ENCODE measurements at regions of chr10 and their contacts with region 1.

Region 1: GRCh38 chr10:43671656-43672531 is 23.2 kb upstream of the ZNF32 start:
- DNase-seq: peak; percentile 14 to 44
- ATAC-seq: peak; percentile 73 to 83
- H3K4me3 ChIP-seq: no peak overlapping the region
- H3K27ac ChIP-seq: no peak overlapping the region
- H3K4me1 ChIP-seq: no peaks in the 10 kb centered on the region
- H3K27me3 ChIP-seq: peaks cover 8 to 16% (median 8%) of the 10 kb centered on the region in 3 donors
- CTCF ChIP-seq: peak; percentile 76 to 88 (median 82)
- POLR2A ChIP-seq: no peak

Region 2: GRCh38 chr10:44217274-44217820 is 545.5 kb after region 1 on chr10:
- in situ Hi-C with region 1: no loop called
- intact Hi-C with region 1: no loop called
- DNase-seq: no peak
- ATAC-seq: no peak
- H3K4me3 ChIP-seq: no peak overlapping the region
- H3K27ac ChIP-seq: no peak overlapping the region
- H3K4me1 ChIP-seq: no peaks in the 10 kb centered on the region
- H3K27me3 ChIP-seq: no peaks in the 10 kb centered on the region
- CTCF ChIP-seq: no peak
- POLR2A ChIP-seq: no peak

Region 3: GRCh38 chr10:44310762-44311562 is 639.1 kb after region 1 on chr10:
- in situ Hi-C with region 1: loop called in 3 of 4 experiments (anchors 10 to 25 kb)
- intact Hi-C with region 1: loop called (anchors 1 kb)
- DNase-seq: peak; percentile 80 to 88
- ATAC-seq: peak; percentile 73 to 83
- H3K4me3 ChIP-seq: peak overlapping the region; percentile 27 to 62 (median 36)
- H3K27ac ChIP-seq: peak overlapping the region in 3 of 4 donors; percentile 21 to 39 (median 35)
- H3K4me1 ChIP-seq: peaks cover 0 to 8% of the 10 kb centered on the region in 2 donors
- H3K27me3 ChIP-seq: no peaks in the 10 kb centered on the region
- CTCF ChIP-seq: peak; percentile 85 to 97 (median 93)
- POLR2A ChIP-seq: no peak

Region 4: GRCh38 chr10:44398747-44399658 is 727.1 kb after region 1 on chr10:
- in situ Hi-C with region 1: loop called in 2 of 4 experiments (anchors 5 to 10 kb)
- intact Hi-C with region 1: no loop called
- DNase-seq: no peak
- ATAC-seq: no peak
- H3K4me3 ChIP-seq: no peak overlapping the region
- H3K27ac ChIP-seq: no peak overlapping the region
- H3K4me1 ChIP-seq: peaks cover 0 to 5% of the 10 kb centered on the region in 2 donors
- H3K27me3 ChIP-seq: no peaks in the 10 kb centered on the region
- CTCF ChIP-seq: no peak
- POLR2A ChIP-seq: no peak

Region 5: DNA sequence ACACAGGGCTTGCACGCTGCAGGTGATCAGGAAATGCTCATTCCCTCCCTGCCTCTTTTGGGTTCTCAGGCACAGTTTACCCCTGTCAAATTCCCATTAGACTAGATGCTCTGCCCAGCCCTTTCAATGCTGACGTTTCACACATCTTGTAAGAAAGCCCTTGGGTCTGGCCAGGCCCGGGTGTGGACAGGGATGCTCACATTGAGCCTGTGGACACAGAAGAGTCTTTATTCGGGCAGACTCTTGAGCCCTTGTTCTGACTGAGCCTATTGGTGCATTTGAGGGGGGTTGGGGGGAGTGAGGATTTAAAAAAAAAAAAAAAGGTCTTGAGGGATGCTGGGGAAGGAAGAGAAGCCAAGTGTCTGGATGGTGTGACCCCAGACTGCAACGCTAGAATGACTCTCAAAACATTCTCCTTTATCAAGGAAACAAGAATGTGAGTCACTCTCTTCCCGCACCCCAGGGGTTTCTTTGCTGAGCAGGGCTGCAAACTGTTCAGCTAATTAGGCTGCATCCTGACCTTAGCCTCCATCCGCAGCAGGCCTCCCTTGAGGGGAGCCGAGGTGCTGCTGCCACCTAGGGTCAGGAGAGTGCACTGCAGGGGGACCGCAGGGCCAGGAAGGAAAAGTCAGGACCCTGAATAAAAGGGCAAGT is 1185.6 kb after region 1 on chr10:
- in situ Hi-C with region 1: loop called (anchors 5 to 10 kb)
- intact Hi-C with region 1: loop called (anchors 2 kb)
- DNase-seq: peak; percentile 25 to 29
- ATAC-seq: peak; percentile 27 to 57
- H3K4me3 ChIP-seq: no peak overlapping the region
- H3K27ac ChIP-seq: no peak overlapping the region
- H3K4me1 ChIP-seq: no peaks in the 10 kb centered on the region
- H3K27me3 ChIP-seq: no peaks in the 10 kb centered on the region
- CTCF ChIP-seq: peak; percentile 61 to 95 (median 84)
- POLR2A ChIP-seq: no peak

Region 6: GRCh38 chr10:44864637-44865288 is 1192.9 kb after region 1 on chr10:
- in situ Hi-C with region 1: loop called (anchors 5 to 10 kb)
- intact Hi-C with region 1: loop called (anchors 2 kb)
- DNase-seq: peak; percentile 71 to 78
- ATAC-seq: peak; percentile 91 to 94
- H3K4me3 ChIP-seq: peak overlapping the region; percentile 51 to 64 (median 60)
- H3K27ac ChIP-seq: peak overlapping the region; percentile 36 to 65 (median 56)
- H3K4me1 ChIP-seq: peaks cover 0 to 9% of the 10 kb centered on the region in 2 donors
- H3K27me3 ChIP-seq: peaks cover 0 to 6% (median 0%) of the 10 kb centered on the region in 3 donors
- CTCF ChIP-seq: peak; percentile 86 to 98 (median 95)
- POLR2A ChIP-seq: no peak

Measured in gastrocnemius medialis (tissue), 4 donors.